ENCODE measurements at regions of chr15 and their contacts with region 1.

Region 1: GRCh38 chr15:68550481-68551295 is 28.1 kb upstream of the CORO2B start:
- DNase-seq: no peak
- ATAC-seq: peak; percentile 59
- H3K4me3 ChIP-seq: no peak overlapping the region
- H3K27ac ChIP-seq: no peak overlapping the region
- H3K4me1 ChIP-seq: no peaks in the 10 kb centered on the region
- H3K27me3 ChIP-seq: no peaks in the 10 kb centered on the region
- CTCF ChIP-seq: peak; percentile 83 to 88 (median 88)
- EP300 ChIP-seq: no peak
- POLR2A ChIP-seq: no peak
- RAD21 ChIP-seq: peak; percentile 68

Region 2: GRCh38 chr15:68517285-68517761 is 33.4 kb before region 1 on chr15:
- CTCF ChIA-PET with region 1: interaction called, 10 read pairs
- POLR2A ChIA-PET with region 1: no interaction called
- RAD21 ChIA-PET with region 1: no interaction called
- SMC1A ChIA-PET with region 1: interaction called, 3 read pairs
- in situ Hi-C with region 1: no loop called
- intact Hi-C with region 1: no loop called
- DNase-seq: no peak
- ATAC-seq: no peak
- H3K4me3 ChIP-seq: no peak overlapping the region
- H3K27ac ChIP-seq: no peak overlapping the region
- H3K4me1 ChIP-seq: no peaks in the 10 kb centered on the region
- H3K27me3 ChIP-seq: peaks cover 0 to 6% of the 10 kb centered on the region in 2 experiments; a peak in 1 of 4 replicates
- CTCF ChIP-seq: no peak
- EP300 ChIP-seq: no peak
- POLR2A ChIP-seq: no peak
- RAD21 ChIP-seq: no peak

Region 3: DNA sequence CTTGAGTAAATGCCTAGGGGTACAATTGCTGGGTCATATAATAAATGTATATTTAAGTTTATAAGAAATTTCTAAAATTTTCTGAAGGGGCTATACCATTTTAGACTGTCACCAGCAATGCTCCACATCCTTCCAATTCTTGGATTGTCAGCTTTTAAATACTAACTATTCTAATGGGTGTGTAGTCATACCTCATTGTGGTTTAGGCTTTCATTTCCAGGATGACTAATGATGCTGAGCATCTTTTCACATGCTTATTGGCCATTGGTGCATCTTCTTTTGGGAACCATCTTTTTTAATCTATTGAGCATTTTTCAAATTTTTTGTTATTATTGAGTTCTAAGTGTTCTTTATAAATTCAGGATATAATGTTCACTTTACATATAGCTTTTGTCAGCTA is 24.4 kb before region 1 on chr15:
- CTCF ChIA-PET with region 1: interaction called, 18 read pairs
- POLR2A ChIA-PET with region 1: no interaction called
- RAD21 ChIA-PET with region 1: interaction called, 3 read pairs
- SMC1A ChIA-PET with region 1: interaction called, 4 read pairs
- in situ Hi-C with region 1: no loop called
- intact Hi-C with region 1: no loop called
- DNase-seq: no peak
- ATAC-seq: peak; percentile 85
- H3K4me3 ChIP-seq: no peak overlapping the region
- H3K27ac ChIP-seq: no peak overlapping the region
- H3K4me1 ChIP-seq: peaks cover 10% of the 10 kb centered on the region; the same call in 1 of the 2 replicates
- H3K27me3 ChIP-seq: no peaks in the 10 kb centered on the region
- CTCF ChIP-seq: no peak
- EP300 ChIP-seq: no peak
- POLR2A ChIP-seq: no peak
- RAD21 ChIP-seq: no peak

Region 4: DNA sequence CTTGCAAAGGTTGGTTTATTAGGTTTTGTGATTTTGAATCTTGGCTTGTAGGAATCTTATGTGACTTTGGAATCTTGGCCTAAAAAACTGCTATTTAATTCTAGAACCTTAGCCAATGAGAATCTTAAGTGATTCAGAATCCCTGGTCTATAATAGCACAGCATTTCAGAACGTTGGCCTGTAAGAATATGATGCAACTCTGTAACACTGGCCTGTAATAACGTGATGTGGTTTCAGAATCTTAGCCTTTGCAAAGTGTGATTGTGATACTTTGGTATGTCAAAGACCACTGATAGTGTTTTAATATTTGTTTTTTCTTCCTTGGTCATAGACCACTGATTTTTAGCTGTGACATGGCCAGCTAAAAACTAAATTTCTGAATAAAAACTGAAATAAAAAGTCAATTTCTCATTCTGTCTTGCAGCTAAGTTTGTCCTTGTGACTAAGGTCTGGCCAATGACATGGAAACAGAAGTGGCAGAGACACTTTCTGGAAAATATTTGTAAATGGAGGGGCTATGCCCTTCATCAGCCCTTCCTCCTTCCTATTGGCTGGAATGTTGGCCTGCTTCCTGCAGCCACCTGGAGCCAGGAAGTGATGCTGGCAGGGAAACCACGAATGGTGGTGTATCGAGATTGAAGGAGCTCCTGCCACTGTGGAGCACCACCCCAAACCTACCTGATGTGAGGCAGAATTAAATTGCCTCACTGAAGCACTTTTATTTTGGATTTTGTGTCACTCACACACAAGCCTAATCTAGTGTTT is 14.2 kb before region 1 on chr15:
- CTCF ChIA-PET with region 1: interaction called, 11 read pairs
- POLR2A ChIA-PET with region 1: no interaction called
- RAD21 ChIA-PET with region 1: no interaction called
- SMC1A ChIA-PET with region 1: interaction called, 15 read pairs
- in situ Hi-C with region 1: no loop called
- intact Hi-C with region 1: no loop called
- DNase-seq: no peak
- ATAC-seq: peak; percentile 54
- H3K4me3 ChIP-seq: no peak overlapping the region
- H3K27ac ChIP-seq: no peak overlapping the region
- H3K4me1 ChIP-seq: no peaks in the 10 kb centered on the region
- H3K27me3 ChIP-seq: no peaks in the 10 kb centered on the region
- CTCF ChIP-seq: no peak
- EP300 ChIP-seq: no peak
- POLR2A ChIP-seq: no peak
- RAD21 ChIP-seq: no peak

Region 5: GRCh38 chr15:68672781-68673205 is 122.1 kb after region 1 on chr15:
- CTCF ChIA-PET with region 1: interaction called, 75 read pairs
- POLR2A ChIA-PET with region 1: no interaction called
- RAD21 ChIA-PET with region 1: interaction called, 15 read pairs
- SMC1A ChIA-PET with region 1: interaction called, 21 read pairs
- in situ Hi-C with region 1: loop called (anchors 5 kb)
- intact Hi-C with region 1: loop called (anchors 1 kb)
- DNase-seq: no peak
- ATAC-seq: no peak
- H3K4me3 ChIP-seq: no peak overlapping the region
- H3K27ac ChIP-seq: no peak overlapping the region
- H3K4me1 ChIP-seq: peaks cover 6% of the 10 kb centered on the region
- H3K27me3 ChIP-seq: no peaks in the 10 kb centered on the region; a peak in 1 of 4 replicates
- CTCF ChIP-seq: no peak; a peak in 1 of 6 replicates
- EP300 ChIP-seq: no peak
- POLR2A ChIP-seq: no peak
- RAD21 ChIP-seq: no peak

Region 6: DNA sequence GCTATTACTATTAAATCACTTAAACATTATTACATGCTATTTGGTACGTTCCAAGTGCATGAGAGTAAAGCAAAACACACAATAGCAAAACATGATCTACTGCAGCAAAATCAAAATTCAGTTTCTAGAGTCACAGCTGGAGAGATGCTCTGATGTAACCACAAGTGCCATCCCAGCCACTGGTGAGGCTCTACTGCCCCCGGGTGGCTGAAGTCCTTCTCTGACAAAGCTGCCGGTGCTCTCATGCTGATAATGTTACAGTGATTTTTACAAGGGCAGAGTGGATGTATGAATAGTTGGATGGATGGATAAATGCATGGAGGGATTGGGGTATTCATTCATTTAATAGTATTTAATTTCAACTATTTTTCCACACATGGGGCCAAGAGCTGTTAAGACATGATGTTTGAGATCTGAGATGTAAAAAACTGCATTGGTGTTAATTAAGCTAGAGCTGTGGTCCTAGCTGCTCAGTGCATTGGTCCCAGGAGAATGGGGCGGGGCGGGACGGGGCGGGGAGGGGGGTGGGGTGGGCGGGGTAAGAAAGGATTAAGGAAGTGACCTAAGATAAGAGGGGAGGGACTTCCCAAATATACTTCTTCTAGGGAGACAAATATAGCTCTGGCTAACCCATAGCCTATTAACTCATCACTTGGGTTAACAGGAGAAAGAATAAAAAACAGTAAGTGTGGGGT is 374.3 kb after region 1 on chr15:
- CTCF ChIA-PET with region 1: interaction called, 12 read pairs
- POLR2A ChIA-PET with region 1: no interaction called
- RAD21 ChIA-PET with region 1: interaction called, 7 read pairs
- SMC1A ChIA-PET with region 1: interaction called, 3 read pairs
- in situ Hi-C with region 1: no loop called
- intact Hi-C with region 1: loop called (anchors 5 kb)
- DNase-seq: peak; percentile 20
- ATAC-seq: peak; percentile 93
- H3K4me3 ChIP-seq: no peak overlapping the region
- H3K27ac ChIP-seq: no peak overlapping the region
- H3K4me1 ChIP-seq: no peaks in the 10 kb centered on the region
- H3K27me3 ChIP-seq: peaks cover 0 to 3% of the 10 kb centered on the region in 2 experiments; a peak in 1 of 4 replicates
- CTCF ChIP-seq: peak; percentile 74 to 78 (median 75); a peak in 5 of 6 replicates
- EP300 ChIP-seq: no peak
- POLR2A ChIP-seq: no peak
- RAD21 ChIP-seq: peak; percentile 65

Measured in GM12878 (cell line).